Gastrocnemius medialis (tissue), 4 donors: ENCODE measurements at regions of chr10 and their contacts with region 1.

Region 1: DNA sequence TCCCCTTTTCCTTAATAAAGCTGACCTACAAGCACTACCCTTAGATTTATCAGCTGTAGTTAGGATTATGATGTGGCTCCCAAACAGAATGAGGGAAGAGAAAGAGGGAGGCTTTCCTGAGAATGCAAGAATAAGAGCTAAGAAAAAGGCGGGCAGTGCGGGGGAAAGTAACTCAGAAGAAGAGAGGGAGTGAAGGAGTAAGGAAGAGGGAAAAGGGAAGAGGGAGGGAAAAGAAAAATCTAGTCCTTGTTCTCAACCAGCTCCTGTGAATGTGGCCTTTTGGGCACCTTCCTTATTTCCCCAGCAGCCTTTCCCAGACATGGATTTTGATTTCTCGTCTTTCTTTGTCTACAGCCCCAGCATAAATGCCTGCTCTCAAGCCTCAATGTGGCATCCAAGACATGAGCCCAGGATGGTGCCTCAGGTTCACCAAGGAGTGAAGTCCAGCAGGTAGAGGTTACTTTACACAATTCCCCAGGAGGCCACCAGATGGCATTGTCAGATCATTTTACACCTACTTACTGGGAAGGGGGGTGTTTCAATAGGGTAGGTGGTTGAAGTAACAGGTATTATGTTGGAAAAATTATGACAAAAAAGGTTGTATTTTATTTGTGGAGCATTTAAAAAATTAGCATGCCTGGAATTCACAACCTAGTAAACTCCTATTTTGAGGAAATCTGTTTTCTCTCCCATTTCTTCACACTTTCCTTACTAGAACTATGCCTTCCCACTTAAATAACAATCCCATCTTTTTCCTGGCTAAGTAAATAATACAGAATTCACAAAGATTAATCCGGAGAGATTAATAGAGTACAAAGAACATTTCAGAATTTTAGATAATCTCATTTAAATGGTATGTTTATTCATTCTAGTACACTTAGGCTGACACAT is 106.5 kb downstream of the HTR7 start:
- DNase-seq: no peak
- ATAC-seq: no peak
- H3K4me3 ChIP-seq: no peak overlapping the region
- H3K27ac ChIP-seq: no peak overlapping the region
- H3K4me1 ChIP-seq: no peaks in the 10 kb centered on the region
- H3K27me3 ChIP-seq: no peaks in the 10 kb centered on the region
- CTCF ChIP-seq: peak; percentile 40 to 63 (median 47)
- POLR2A ChIP-seq: no peak

Region 2: GRCh38 chr10:90871766-90872647 is 120.7 kb after region 1 on chr10 and contains the start of gene RPP30:
- in situ Hi-C with region 1: loop called in 1 of 4 experiments (anchors 10 kb)
- intact Hi-C with region 1: loop called (anchors 2 kb)
- DNase-seq: peak; percentile 68 to 81
- ATAC-seq: peak; percentile 96 to 97
- H3K4me3 ChIP-seq: peak within 1 kb of the TSS; percentile 67 to 99 (median 87)
- H3K27ac ChIP-seq: peak within 1 kb of the TSS; percentile 82 to 93 (median 85)
- H3K4me1 ChIP-seq: peaks cover 16 to 21% of the 10 kb centered on the region in 2 donors
- H3K27me3 ChIP-seq: peaks cover 0 to 5% (median 0%) of the 10 kb centered on the region in 3 donors
- CTCF ChIP-seq: no peak
- POLR2A ChIP-seq: peak; percentile 31 to 41
- total RNA-seq, gene RPP30: 20.4 to 44.9 (median 31.3) TPM